ENCODE measurements at regions of chr5 and their contacts with region 1.

Region 1: DNA sequence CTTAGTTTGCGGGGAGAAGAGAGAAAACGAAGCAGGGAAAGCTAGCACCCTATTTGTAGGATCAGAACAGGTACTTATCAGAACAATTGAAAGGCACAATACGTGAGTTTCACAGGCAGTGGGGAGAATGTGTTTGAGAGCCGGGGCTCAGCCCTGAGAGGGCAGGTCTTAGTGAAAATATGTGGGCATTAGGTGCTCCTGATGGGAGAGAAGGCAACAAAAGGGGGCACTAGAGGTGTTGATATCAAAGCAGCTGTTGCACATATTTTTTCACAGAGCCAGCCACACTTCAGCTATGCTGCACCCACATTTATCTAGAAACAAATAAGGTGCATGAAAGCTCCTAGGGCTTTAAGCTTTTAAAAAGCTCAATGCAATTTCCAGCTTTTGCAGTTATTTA is 99.7 kb upstream of the MAN2A1 start:
- DNase-seq: peak in 5 of 9 donors; percentile 7 to 39 (median 12)
- ATAC-seq: peak; percentile 54
- H3K4me3 ChIP-seq: no peak overlapping the region
- H3K4me3 Mint-ChIP-seq: no peak overlapping the region
- H3K27ac ChIP-seq: no peak overlapping the region
- H3K27ac Mint-ChIP-seq: peak overlapping the region in 2 of 9 donors; percentile 38 to 47
- H3K4me1 ChIP-seq: no peaks in the 10 kb centered on the region
- H3K4me1 Mint-ChIP-seq: peaks cover 0 to 16% (median 10%) of the 10 kb centered on the region in 7 donors
- H3K27me3 ChIP-seq: no peaks in the 10 kb centered on the region
- H3K27me3 Mint-ChIP-seq: peaks cover 0 to 2% (median 0%) of the 10 kb centered on the region in 5 donors

Region 2: GRCh38 chr5:110054240-110054639 is 464.3 kb after region 1 on chr5:
- CTCF ChIA-PET with region 1: no interaction called
- POLR2A ChIA-PET with region 1: no interaction called
- intact Hi-C with region 1: loop called in 1 of 2 experiments (anchors 1 kb)
- DNase-seq: peak; percentile 17 to 93 (median 85)
- ATAC-seq: peak; percentile 89
- H3K4me3 ChIP-seq: peak overlapping the region; percentile 6
- H3K4me3 Mint-ChIP-seq: peak overlapping the region; percentile 50 to 86 (median 65)
- H3K27ac ChIP-seq: peak overlapping the region; percentile 63
- H3K27ac Mint-ChIP-seq: peak overlapping the region; percentile 77 to 96 (median 90)
- H3K4me1 ChIP-seq: peaks cover 21 to 35% of the 10 kb centered on the region in 2 donors
- H3K4me1 Mint-ChIP-seq: peaks cover 10 to 50% (median 35%) of the 10 kb centered on the region in 7 donors
- H3K27me3 ChIP-seq: no peaks in the 10 kb centered on the region
- H3K27me3 Mint-ChIP-seq: no peaks in the 10 kb centered on the region

Region 3: GRCh38 chr5:110342683-110343082 is 752.7 kb after region 1 on chr5:
- CTCF ChIA-PET with region 1: no interaction called
- POLR2A ChIA-PET with region 1: no interaction called
- intact Hi-C with region 1: loop called in 1 of 2 experiments (anchors 2 kb)
- DNase-seq: no peak
- ATAC-seq: no peak
- H3K4me3 ChIP-seq: no peak overlapping the region
- H3K4me3 Mint-ChIP-seq: no peak overlapping the region
- H3K27ac ChIP-seq: no peak overlapping the region
- H3K27ac Mint-ChIP-seq: no peak overlapping the region
- H3K4me1 ChIP-seq: no peaks in the 10 kb centered on the region
- H3K4me1 Mint-ChIP-seq: no peaks in the 10 kb centered on the region
- H3K27me3 ChIP-seq: no peaks in the 10 kb centered on the region
- H3K27me3 Mint-ChIP-seq: no peaks in the 10 kb centered on the region

Region 4: DNA sequence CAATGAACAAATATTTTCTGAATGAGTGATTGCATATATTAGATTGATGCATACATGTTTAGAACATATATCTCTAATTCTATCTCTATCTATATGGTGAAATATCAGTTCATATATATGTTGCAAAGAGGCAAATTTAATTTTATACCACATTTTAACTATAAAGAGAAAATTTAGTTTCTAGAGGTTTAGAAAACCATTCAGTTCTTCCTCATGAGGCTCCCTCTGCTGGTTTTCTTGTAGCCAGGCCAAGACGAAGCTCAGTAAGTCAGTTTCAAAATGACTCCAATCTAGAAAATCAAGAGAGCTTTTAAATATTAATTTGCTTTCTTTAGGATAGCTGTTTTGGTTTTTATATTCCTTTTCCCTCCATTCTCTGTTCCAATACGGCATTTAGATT is 824.4 kb after region 1 on chr5:
- CTCF ChIA-PET with region 1: no interaction called
- POLR2A ChIA-PET with region 1: no interaction called
- intact Hi-C with region 1: loop called in 1 of 2 experiments (anchors 1 kb)
- DNase-seq: peak in 4 of 9 donors; percentile 3 to 27 (median 16)
- ATAC-seq: no peak
- H3K4me3 ChIP-seq: no peak overlapping the region
- H3K4me3 Mint-ChIP-seq: no peak overlapping the region
- H3K27ac ChIP-seq: no peak overlapping the region
- H3K27ac Mint-ChIP-seq: peak overlapping the region in 1 of 9 donors; percentile 27
- H3K4me1 ChIP-seq: no peaks in the 10 kb centered on the region
- H3K4me1 Mint-ChIP-seq: no peaks in the 10 kb centered on the region
- H3K27me3 ChIP-seq: no peaks in the 10 kb centered on the region
- H3K27me3 Mint-ChIP-seq: no peaks in the 10 kb centered on the region

Measured in naive thymus-derived CD4-positive, alpha-beta T cell (primary cell).